Right lobe of liver (tissue), 6 donors: ENCODE measurements at regions of chr7 and their contacts with region 1.

Region 1: GRCh38 chr7:101558742-101559325 is 70.3 kb downstream of the MYL10 start:
- DNase-seq: no peak
- ATAC-seq: peak in 1 of 4 donors; percentile 23
- H3K4me3 ChIP-seq: no peak overlapping the region
- H3K27ac ChIP-seq: no peak overlapping the region
- H3K4me1 ChIP-seq: no peaks in the 10 kb centered on the region
- H3K27me3 ChIP-seq: no peaks in the 10 kb centered on the region
- CTCF ChIP-seq: no peak
- POLR2A ChIP-seq: no peak

Region 2: GRCh38 chr7:101308245-101309085 is 250.4 kb before region 1 on chr7:
- intact Hi-C with region 1: no loop called
- DNase-seq: peak; percentile 80 to 85 (median 82)
- ATAC-seq: peak; percentile 95 to 99 (median 98)
- H3K4me3 ChIP-seq: peak overlapping the region; percentile 29 to 67 (median 54)
- H3K27ac ChIP-seq: peak overlapping the region in 1 of 3 donors; percentile 37
- H3K4me1 ChIP-seq: no peaks in the 10 kb centered on the region
- H3K27me3 ChIP-seq: no peaks in the 10 kb centered on the region
- CTCF ChIP-seq: peak in 2 of 4 donors; percentile 9 to 24
- POLR2A ChIP-seq: no peak

Region 3: DNA sequence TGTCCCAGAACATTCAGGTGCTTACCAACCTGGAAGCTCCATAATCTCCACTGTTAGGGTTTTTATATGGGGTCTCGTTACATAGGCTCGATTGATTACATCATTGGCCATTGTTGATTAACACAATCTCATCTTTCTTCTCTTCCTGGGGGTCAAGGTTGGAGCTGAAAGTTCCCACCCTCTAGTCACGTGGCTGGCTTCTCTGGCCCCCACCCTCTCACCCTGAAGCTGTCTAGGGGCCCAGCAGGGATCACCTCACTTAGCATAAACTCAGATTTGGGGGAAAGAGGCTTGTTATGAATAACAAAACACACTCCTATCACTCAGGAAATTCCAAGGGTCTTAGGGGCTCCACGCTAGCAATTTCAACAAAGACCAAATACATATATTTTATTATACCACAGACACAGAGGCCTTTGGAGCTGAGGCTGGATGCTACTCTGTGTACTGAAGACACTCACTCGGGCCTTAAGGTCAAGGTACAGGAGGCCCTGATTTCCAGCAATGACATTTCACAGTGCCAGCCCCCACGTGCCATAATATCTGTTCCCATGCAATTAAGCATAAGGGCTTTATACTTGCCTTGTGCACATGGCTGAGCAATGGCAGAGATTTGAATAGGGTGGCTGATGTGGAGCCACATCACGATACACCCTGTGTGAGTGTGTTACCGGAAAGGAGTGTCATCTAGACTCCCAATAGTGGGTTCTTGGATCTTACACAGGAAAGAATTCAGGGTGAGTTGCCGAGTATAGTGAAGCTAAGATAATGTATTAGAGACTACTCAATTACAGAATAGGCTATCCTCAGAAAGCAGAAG is 88.0 kb before region 1 on chr7:
- intact Hi-C with region 1: no loop called
- DNase-seq: no peak
- ATAC-seq: no peak
- H3K4me3 ChIP-seq: no peak overlapping the region
- H3K27ac ChIP-seq: no peak overlapping the region
- H3K4me1 ChIP-seq: no peaks in the 10 kb centered on the region
- H3K27me3 ChIP-seq: no peaks in the 10 kb centered on the region
- CTCF ChIP-seq: no peak
- POLR2A ChIP-seq: no peak

Region 4: DNA sequence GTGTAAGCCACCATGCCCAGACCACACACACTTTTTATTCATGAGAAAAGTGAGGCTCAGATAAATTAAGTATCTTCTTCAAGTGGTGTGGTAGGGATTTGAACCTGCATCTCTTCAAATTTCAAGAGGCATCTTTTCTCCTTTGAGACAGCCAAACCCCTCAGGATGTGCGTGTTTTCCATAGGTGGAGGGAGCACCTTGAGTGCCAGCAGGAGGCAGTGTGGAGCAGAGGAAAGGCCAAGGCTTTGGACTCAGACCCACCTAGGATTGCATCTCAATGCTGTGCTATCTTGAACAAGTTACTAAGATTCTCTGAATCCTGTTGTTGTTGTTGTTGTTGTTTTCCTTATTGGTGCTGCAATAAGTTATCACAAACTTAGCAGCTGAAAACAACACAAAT is 110.5 kb after region 1 on chr7:
- intact Hi-C with region 1: loop called in 1 of 2 experiments (anchors 10 kb)
- DNase-seq: no peak
- ATAC-seq: no peak
- H3K4me3 ChIP-seq: no peak overlapping the region
- H3K27ac ChIP-seq: no peak overlapping the region
- H3K4me1 ChIP-seq: no peaks in the 10 kb centered on the region
- H3K27me3 ChIP-seq: no peaks in the 10 kb centered on the region
- CTCF ChIP-seq: peak in 2 of 4 donors; percentile 10 to 29
- POLR2A ChIP-seq: no peak

Region 5: GRCh38 chr7:101882595-101883564 is 324.0 kb after region 1 on chr7:
- intact Hi-C with region 1: no loop called
- DNase-seq: peak; percentile 80 to 93 (median 85)
- ATAC-seq: peak; percentile 87 to 92 (median 90)
- H3K4me3 ChIP-seq: no peak overlapping the region
- H3K27ac ChIP-seq: peak overlapping the region; percentile 86 to 88 (median 87)
- H3K4me1 ChIP-seq: peaks cover 0 to 48% (median 14%) of the 10 kb centered on the region in 4 donors
- H3K27me3 ChIP-seq: no peaks in the 10 kb centered on the region
- CTCF ChIP-seq: no peak
- POLR2A ChIP-seq: peak; percentile 60